ENCODE measurements at regions of chr9 and their contacts with region 1.

Region 1: GRCh38 chr9:27529316-27530278 is at the start of gene MOB3B:
- DNase-seq: peak; percentile 72
- H3K4me3 Mint-ChIP-seq: peak within 1 kb of the TSS; percentile 79
- H3K27ac Mint-ChIP-seq: no peak within 1 kb of the TSS
- H3K4me1 Mint-ChIP-seq: peaks cover 10% of the 10 kb centered on the region
- H3K27me3 Mint-ChIP-seq: peaks cover 39% of the 10 kb centered on the region
- total RNA-seq, gene MOB3B: 0.05 to 0.13 TPM

Region 2: DNA sequence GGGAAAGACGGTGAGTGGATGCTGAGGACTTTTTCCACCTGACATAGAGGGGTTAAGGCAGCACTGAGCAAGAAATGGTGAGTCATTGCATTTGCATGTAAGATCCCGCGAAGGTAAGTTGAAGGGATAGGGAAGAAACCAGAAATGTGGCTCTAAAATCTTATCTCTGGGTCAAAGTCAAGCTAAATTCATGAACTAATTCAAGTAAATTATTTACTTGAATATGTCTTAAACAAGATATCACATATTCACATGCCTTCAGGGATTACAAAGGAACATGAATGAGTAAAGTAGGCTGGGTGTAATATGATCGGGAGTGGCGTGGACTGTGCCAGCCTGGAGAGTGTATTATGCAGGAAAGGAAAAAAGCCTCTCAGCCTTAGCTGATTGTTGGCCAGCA is 158.2 kb before region 1 on chr9:
- CTCF ChIA-PET with region 1: no interaction called
- POLR2A ChIA-PET with region 1: no interaction called
- DNase-seq: no peak
- H3K4me3 Mint-ChIP-seq: no peak overlapping the region
- H3K27ac Mint-ChIP-seq: no peak overlapping the region
- H3K4me1 Mint-ChIP-seq: peaks cover 14% of the 10 kb centered on the region
- H3K27me3 Mint-ChIP-seq: peaks cover 44% of the 10 kb centered on the region

Region 3: DNA sequence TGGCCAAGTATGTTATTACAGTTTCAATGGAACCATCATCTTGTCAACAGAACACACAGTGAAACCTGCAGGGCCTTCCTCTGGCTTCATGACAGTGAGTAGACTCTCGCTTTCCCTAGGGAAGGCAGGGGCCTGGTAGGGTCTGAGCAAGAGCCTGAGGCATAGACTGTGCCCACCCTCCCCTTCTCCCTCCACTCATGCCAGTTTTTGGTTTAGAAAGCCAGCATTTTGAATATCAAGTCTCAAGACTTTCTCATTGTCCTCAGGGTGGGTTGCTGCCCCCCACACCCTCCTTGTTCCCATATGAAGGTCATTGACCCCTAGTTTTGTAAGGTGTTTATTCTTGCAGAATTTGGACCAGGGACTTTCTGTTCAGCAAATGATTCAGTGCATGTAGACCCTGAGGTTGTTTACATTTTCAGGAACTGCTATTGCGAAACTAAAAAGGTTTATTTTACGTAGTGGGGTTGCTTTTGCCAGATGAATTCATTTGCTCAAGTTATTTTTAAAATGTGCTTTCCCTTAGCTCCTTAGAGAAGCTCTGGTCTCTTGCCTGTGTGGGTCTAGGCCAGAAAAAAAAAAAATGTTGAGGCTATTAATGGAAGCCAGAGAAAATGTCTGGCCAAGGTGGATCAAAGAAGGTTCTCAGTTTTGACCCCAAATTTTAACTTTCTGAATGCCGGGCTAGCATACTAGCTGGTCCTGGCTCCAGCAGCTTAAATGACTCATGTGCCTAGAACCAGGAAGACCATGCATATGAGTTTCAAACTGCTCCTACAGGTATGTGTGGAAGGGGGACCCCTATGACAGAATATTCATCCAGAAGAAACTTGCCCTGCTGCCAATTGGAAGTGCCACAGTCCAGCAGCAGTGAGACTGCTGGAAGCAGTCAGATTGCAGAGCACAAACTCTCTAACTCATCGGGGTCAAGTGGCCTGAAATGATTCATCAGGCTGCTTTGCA is 10.2 kb after region 1 on chr9:
- CTCF ChIA-PET with region 1: interaction called, 23 read pairs
- POLR2A ChIA-PET with region 1: no interaction called
- DNase-seq: no peak
- H3K4me3 Mint-ChIP-seq: no peak overlapping the region
- H3K27ac Mint-ChIP-seq: no peak overlapping the region
- H3K4me1 Mint-ChIP-seq: no peaks in the 10 kb centered on the region
- H3K27me3 Mint-ChIP-seq: no peaks in the 10 kb centered on the region

Region 4: DNA sequence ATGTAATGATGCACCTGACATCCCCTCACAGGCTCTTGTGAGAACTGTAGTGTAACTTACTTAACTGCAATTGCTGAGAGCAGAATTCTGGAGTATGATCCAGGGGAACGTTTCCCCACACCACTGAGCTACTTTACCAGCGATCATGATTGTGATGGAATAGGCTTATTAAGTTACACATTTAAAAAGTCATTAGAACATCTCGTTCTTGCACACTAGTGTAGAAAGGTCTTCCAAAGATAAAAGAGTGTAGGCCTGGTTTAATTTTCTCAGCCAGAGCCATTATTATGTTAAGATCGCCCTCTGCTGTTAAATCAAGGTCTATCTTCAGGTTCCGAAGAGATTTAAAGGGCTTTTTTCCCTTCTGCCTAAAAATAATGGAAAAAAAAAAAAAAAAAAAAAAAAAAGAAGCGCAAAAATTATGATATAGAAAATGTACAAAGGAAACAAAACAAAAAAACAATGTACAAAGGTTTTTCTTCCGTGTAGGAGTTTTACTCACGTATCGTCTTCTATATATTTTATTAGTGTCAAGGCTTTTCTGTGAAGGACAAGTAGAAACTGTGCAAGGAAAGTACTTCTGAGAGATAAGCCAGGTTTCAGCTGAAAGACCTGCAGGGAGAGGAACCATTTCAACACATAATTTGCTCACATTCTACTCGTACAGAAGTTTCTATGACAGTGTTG is 18.6 kb after region 1 on chr9:
- CTCF ChIA-PET with region 1: interaction called, 23 read pairs
- POLR2A ChIA-PET with region 1: no interaction called
- DNase-seq: no peak
- H3K4me3 Mint-ChIP-seq: no peak overlapping the region
- H3K27ac Mint-ChIP-seq: no peak overlapping the region
- H3K4me1 Mint-ChIP-seq: no peaks in the 10 kb centered on the region
- H3K27me3 Mint-ChIP-seq: no peaks in the 10 kb centered on the region

Region 5: GRCh38 chr9:27622693-27623340 is 93.2 kb after region 1 on chr9:
- CTCF ChIA-PET with region 1: no interaction called
- POLR2A ChIA-PET with region 1: no interaction called
- DNase-seq: no peak
- H3K4me3 Mint-ChIP-seq: no peak overlapping the region
- H3K27ac Mint-ChIP-seq: no peak overlapping the region
- H3K4me1 Mint-ChIP-seq: no peaks in the 10 kb centered on the region
- H3K27me3 Mint-ChIP-seq: peaks cover 12% of the 10 kb centered on the region